ENCODE measurements at regions of chr11 and their contacts with region 1.

Region 1: DNA sequence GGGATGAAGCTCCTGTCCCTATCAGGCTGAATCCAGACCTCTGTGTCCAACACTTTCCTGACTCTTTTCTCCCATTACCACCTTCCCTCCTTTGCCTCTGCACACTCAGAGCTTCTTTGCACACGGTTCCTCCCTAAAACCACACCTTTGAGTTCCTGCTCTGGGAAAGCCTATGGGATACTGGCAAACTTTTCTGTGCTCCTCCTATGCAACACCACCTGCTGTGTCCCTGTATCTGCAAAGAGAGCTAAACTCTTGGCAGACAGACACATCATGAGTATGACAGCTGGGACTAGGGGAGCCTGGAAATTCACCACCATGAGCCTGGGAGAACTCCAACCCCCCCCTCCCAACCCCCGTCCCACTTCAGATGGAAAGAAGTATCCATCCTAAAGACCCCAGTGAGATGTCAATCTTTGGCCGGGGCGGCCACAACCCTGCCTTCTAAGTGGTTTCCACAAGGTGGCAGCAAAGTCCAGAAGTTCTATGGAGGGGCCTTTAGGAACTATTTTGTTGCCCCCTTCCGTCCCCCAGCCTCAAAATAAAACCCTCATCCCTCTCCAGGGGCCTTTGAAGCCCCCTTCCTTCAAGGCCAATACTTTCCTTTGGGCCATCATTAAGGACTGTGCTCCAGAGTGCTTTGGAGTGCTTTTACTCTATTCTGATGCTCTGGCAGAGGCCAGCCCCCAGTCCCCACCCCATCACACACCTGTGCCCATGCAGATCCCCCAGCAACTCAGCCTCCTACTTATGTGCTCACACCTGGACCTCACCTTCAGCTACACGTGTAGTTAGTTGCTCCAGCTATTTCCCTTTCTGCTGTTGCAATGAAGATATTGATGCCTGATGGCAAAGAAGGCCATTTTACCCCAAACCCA is 19.4 kb downstream of the HTR3A start:
- DNase-seq: no peak
- ATAC-seq: no peak
- H3K4me3 ChIP-seq: no peak overlapping the region
- H3K27ac ChIP-seq: no peak overlapping the region
- H3K4me1 ChIP-seq: no peaks in the 10 kb centered on the region
- H3K27me3 ChIP-seq: no peaks in the 10 kb centered on the region

Region 2: GRCh38 chr11:113884361-113884836 is 109.9 kb before region 1 on chr11:
- intact Hi-C with region 1: no loop called
- DNase-seq: no peak
- ATAC-seq: no peak
- H3K4me3 ChIP-seq: no peak overlapping the region
- H3K27ac ChIP-seq: no peak overlapping the region
- H3K4me1 ChIP-seq: no peaks in the 10 kb centered on the region
- H3K27me3 ChIP-seq: no peaks in the 10 kb centered on the region

Region 3: DNA sequence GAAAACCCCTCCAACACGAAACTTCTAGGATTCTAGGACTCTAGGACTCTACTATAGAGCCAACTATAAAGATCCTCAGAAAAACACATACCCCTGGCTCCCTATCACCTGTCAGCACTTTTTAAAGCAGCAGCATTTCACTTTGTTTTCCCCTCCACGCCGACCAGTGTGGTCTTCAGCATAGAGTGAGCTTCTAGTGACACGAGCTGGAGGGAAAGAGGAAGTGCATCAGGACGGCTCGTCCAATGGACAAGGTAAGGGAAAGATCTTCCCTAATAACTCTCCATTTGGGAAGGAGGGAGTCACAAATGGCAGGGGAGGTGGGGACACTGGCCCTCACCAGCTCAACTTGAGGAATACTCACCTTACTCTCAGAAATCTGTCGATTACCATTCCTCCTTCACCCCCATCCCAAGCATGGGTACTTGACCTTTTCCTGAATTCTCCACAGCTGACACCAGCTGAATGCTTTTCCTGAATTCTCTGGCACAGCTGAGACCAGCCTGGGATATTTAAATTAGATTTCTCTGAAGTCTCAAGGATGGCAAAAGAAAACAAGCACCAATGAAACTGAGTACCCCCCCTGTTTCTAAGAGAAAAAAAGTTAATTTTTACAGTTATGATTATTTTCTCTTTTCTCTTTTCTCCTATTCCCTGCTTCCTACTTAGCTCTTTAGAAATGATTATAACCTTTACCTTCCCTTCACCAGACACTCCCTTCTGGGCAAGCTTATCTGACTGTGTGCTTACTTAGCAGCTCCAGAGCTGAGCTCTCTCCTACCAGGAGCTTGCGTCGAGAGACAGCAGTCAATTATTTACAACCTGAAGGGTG is 268.6 kb after region 1 on chr11:
- intact Hi-C with region 1: loop called (anchors 1 to 2 kb)
- DNase-seq: no peak
- ATAC-seq: peak; percentile 39
- H3K4me3 ChIP-seq: no peak overlapping the region
- H3K27ac ChIP-seq: no peak overlapping the region
- H3K4me1 ChIP-seq: no peaks in the 10 kb centered on the region
- H3K27me3 ChIP-seq: no peaks in the 10 kb centered on the region

Measured in aorta (tissue), 5 donors.